ENCODE measurements at regions of chr3 and their contacts with region 1.

Region 1: DNA sequence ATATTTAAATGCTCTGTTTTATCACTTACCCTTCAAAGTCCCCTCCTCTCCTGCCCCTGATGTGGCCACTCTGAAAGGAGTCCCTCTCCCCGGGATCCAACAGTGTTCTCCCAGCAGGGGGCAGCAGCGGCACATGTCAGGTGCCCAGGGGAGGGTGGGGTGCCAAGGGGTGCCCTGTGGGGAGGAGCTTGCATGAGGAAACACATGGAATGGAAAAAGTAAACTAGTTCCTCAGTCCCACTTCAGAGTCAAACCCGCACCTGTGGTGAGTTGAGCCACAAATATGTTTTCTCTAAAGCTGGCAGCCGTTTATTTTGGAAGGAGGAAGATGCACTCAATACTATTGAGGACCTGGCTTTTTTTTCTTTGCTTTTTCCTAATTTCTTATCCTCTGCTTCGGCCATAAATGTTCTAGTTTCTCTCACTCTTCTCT is 30.1 kb upstream of the NRROS start:
- DNase-seq: peak; percentile 97
- H3K4me3 Mint-ChIP-seq: peak overlapping the region; percentile 47
- H3K27ac Mint-ChIP-seq: peak overlapping the region; percentile 68
- H3K4me1 Mint-ChIP-seq: peaks cover 32% of the 10 kb centered on the region
- H3K27me3 Mint-ChIP-seq: no peaks in the 10 kb centered on the region

Region 2: DNA sequence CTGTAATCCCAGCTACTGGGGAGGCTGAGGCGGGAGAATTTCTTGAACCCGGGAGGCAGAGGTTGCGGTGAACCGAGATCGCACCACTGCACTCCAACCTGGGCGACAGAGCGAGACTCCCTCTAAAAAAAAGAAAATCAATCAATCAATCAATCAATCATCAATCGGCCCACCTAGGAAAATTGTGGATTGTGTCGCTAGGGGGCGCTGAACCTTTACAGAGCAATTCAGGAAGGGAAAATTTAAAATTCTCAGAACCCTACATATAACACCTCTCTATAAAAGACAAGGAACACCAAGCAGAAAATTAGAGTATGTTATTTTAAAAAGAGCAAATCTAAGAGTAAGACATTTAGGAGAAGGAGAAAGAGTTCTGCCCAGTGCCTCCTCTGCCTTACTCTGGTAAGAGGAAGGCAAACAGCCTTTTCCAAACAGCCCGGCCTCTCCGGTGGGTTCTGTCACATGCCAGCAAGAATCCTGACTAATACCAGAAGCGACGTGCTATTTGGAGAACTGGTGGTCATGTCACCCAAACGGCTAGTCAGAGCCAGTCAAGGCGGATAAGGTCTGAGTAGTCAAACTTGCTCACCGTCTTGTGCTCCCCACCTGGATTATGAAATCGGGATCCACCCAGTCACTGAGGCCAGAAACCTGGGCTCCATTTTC is 71.9 kb before region 1 on chr3:
- CTCF ChIA-PET with region 1: interaction called, 3 read pairs
- POLR2A ChIA-PET with region 1: no interaction called
- intact Hi-C with region 1: loop called (anchors 1 kb)
- DNase-seq: peak; percentile 77
- H3K4me3 Mint-ChIP-seq: no peak overlapping the region
- H3K27ac Mint-ChIP-seq: no peak overlapping the region
- H3K4me1 Mint-ChIP-seq: peaks cover 2% of the 10 kb centered on the region
- H3K27me3 Mint-ChIP-seq: peaks cover 3% of the 10 kb centered on the region

Region 3: DNA sequence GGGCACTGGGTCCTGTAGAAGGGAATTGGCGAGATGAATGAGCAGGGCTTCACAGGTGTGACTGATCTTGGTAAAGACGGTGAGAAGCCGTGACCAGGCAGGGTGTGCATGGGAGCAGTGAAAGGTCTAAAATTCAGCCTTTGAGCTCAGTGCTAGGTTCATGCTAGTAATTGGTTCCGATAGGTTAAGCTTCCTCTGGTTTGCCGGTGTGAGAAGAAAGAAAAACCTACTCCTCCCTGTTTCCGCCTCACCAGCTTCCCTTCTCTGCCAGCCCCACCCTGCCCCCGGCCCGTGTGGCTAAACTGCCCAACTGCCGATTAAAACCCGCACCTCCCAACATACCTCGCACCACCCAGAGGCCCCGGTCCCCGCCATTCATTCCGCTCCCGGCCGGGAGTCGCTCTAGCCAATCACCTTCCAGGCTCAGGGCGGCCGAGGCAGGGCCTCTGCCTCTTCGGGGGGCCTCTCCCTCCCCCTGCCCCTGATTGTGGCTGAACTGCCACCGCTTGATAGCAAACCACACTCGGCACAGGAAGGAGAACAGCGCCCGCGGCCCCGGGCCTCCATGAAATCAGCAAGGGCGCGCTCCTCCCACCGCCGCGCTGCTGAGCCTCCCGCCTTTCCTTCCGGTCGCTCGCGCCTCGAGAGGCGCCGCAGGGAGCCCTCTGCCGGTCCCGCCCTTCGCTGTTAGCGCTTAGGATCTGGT is 22.8 kb after region 1 on chr3:
- CTCF ChIA-PET with region 1: interaction called, 14 read pairs
- POLR2A ChIA-PET with region 1: interaction called, 5 read pairs
- intact Hi-C with region 1: loop called (anchors 1 kb)
- DNase-seq: peak; percentile 92
- H3K4me3 Mint-ChIP-seq: peak overlapping the region; percentile 80
- H3K27ac Mint-ChIP-seq: peak overlapping the region; percentile 94
- H3K4me1 Mint-ChIP-seq: peaks cover 53% of the 10 kb centered on the region
- H3K27me3 Mint-ChIP-seq: no peaks in the 10 kb centered on the region

Region 4: DNA sequence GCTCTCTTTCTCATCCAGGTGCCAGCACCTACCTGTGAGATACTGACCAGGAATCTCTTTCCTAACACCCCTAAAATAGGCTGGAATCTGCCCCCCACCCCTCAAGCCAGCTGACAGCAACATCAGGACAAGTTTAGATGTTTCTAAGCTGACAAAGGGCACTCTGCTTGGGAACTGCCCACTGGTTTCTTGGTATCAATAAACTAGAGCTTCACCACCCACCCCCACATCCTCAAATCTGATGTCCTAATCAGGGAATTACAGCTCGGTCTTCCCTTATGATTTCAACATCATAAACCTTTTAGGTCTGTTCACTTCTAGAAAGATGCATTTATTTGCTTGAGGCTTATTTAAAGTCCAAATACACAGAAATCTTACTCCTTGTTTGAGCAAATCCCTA is 68.0 kb after region 1 on chr3:
- CTCF ChIA-PET with region 1: interaction called, 28 read pairs
- POLR2A ChIA-PET with region 1: no interaction called
- intact Hi-C with region 1: no loop called
- DNase-seq: no peak
- H3K4me3 Mint-ChIP-seq: no peak overlapping the region
- H3K27ac Mint-ChIP-seq: no peak overlapping the region
- H3K4me1 Mint-ChIP-seq: peaks cover 20% of the 10 kb centered on the region
- H3K27me3 Mint-ChIP-seq: no peaks in the 10 kb centered on the region

Region 5: DNA sequence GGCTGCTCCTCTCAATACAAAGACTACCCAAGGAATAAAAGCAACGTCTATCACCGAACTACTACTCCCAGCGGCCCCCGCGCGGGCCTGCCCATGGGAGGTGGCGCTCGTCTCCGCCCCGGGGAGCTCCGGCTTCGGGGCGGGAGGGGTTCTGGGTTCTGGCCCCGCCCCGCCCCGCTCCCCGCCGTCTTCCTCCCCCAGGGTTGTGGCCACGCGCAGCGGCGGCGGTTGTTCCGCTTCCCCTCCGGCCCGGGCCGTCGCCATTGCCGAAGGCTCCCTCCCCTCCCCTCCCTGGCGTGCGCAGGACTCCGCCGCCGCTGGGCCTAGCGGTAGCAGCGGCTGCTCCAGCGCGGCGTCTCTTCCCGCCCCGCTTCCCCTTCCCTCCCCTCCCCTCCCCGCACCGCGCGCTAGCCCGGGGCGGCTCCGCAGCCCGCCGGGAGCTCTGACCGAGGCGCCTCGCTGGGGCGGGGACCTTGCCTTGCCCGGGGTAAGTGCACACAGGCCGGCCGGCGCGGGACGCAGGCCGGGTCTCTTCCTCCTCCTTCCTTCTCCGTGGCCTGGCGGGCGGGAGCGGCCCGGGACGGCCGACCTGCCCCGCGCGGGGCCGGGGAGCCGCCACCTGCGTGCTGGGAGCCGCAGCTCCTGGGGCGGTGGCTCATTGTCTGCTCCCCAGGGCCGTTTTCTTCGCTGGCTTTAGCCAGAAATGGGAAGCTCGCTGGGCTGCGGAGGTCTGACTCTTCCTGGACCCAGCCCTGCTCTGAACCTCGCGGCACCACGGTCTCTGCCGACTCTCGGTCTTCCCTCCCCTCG is 130.5 kb after region 1 on chr3 and contains the start of gene PAK2:
- CTCF ChIA-PET with region 1: interaction called, 3 read pairs
- POLR2A ChIA-PET with region 1: no interaction called
- intact Hi-C with region 1: loop called (anchors 1 kb)
- DNase-seq: peak; percentile 92
- H3K4me3 Mint-ChIP-seq: peak within 1 kb of the TSS; percentile 98
- H3K27ac Mint-ChIP-seq: peak within 1 kb of the TSS; percentile 96
- H3K4me1 Mint-ChIP-seq: peaks cover 28% of the 10 kb centered on the region
- H3K27me3 Mint-ChIP-seq: no peaks in the 10 kb centered on the region
- total RNA-seq, gene PAK2: 98.4 to 101 TPM

Region 6: DNA sequence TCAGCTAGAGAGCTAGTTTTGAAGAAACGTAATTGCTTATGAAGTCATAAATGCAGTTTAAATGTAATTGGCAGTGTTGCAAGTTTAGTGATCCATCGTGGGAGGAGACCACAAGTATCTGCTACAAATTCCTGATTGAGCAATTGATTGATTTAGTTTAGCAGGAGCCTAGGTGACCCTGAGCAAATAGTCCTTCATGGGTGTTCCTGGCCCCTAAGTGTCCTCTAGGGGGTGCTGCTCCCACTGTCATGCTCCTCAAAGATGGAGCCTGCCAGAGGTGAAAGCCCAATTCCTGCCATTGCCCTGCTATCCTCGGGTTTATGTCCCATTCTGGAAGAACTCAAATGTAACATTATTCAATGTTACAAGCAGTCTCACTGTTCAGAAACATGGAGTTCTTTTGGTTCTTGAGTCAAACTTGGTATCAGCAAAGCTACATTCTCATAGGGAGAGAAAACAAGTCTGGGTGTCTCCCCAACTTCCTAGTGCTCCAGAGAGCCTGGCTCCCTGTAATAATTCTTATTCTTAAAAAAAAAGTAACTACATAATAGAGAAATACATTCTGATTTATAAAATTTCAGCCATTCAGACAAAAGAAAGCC is 228.6 kb after region 1 on chr3:
- CTCF ChIA-PET with region 1: interaction called, 6 read pairs
- POLR2A ChIA-PET with region 1: no interaction called
- intact Hi-C with region 1: loop called (anchors 1 kb)
- DNase-seq: peak; percentile 85
- H3K4me3 Mint-ChIP-seq: no peak overlapping the region
- H3K27ac Mint-ChIP-seq: no peak overlapping the region
- H3K4me1 Mint-ChIP-seq: no peaks in the 10 kb centered on the region
- H3K27me3 Mint-ChIP-seq: no peaks in the 10 kb centered on the region

Region 7: DNA sequence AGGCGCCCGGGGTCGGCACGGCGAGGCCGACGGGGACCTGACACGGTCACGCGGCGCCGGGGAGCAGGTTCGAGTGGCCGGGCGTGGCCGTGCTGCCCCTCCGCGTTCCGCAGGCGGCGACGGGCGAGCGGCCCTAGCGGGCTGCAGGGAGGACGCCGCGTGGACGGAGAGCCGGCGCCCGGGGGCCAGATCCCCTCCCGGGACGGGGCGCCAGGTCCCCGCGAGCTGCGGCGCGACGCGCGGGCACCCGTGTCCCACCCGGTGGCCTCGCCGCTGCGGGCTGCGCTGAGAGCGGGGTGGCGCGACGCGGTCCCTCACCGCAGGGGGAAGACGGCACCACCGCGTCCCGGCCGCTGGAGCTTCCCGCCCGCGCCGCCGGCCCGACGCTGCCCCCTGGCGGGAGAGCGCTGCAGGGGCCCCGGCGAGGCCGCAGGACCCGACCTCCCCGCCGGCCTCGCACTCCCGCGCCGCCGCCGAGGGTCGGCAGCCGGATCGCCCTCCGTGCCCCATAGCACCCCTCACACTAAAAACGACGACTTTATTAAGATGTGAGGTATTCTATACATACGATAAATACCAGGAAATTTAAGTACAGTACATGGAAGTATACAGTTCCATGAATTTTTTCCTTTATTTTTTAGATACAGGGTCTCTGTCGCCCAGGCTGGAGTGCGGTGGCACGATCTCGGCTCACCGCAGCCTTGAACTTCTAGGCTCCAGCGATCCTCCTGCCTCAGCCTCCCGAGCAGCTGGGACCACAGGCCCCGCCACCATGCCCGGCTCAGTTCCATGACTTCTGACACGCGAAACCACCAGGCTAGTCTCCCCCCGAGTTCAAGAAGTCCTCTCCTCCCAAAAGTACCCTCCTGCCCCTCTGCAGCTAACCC is 360.5 kb after region 1 on chr3:
- CTCF ChIA-PET with region 1: interaction called, 13 read pairs
- POLR2A ChIA-PET with region 1: no interaction called
- intact Hi-C with region 1: loop called (anchors 5 kb)
- DNase-seq: peak; percentile 78
- H3K4me3 Mint-ChIP-seq: peak overlapping the region; percentile 58
- H3K27ac Mint-ChIP-seq: no peak overlapping the region
- H3K4me1 Mint-ChIP-seq: peaks cover 12% of the 10 kb centered on the region
- H3K27me3 Mint-ChIP-seq: peaks cover 12% of the 10 kb centered on the region

Measured in activated CD4-positive, alpha-beta memory T cell treated with anti-CD3 and anti-CD28 coated beads for 36 hours (primary cell).